Endothelial cell of umbilical vein (primary cell): ENCODE measurements at regions of chr4 and their contacts with region 1.

Region 1: GRCh38 chr4:139890816-139891215 is 225.2 kb downstream of the MGST2 start:
- DNase-seq: peak; percentile 81
- H3K4me3 ChIP-seq: no peak overlapping the region
- H3K27ac ChIP-seq: peak overlapping the region; percentile 51
- H3K4me1 ChIP-seq: peaks cover 24% of the 10 kb centered on the region
- H3K27me3 ChIP-seq: no peaks in the 10 kb centered on the region
- CTCF ChIP-seq: peak; percentile 21 to 22
- POLR2A ChIP-seq: no peak

Region 2: GRCh38 chr4:139901531-139902320 is 10.9 kb after region 1 on chr4:
- CTCF ChIA-PET with region 1: interaction called, 12 read pairs
- POLR2A ChIA-PET with region 1: no interaction called
- dilution Hi-C with region 1: no loop called
- intact Hi-C with region 1: loop called (anchors 1 kb)
- DNase-seq: peak; percentile 79
- H3K4me3 ChIP-seq: peak overlapping the region in 2 of 3 experiments; percentile 1 to 50
- H3K27ac ChIP-seq: peak overlapping the region; percentile 36
- H3K4me1 ChIP-seq: peaks cover 18% of the 10 kb centered on the region
- H3K27me3 ChIP-seq: no peaks in the 10 kb centered on the region
- CTCF ChIP-seq: no peak
- POLR2A ChIP-seq: no peak

Region 3: DNA sequence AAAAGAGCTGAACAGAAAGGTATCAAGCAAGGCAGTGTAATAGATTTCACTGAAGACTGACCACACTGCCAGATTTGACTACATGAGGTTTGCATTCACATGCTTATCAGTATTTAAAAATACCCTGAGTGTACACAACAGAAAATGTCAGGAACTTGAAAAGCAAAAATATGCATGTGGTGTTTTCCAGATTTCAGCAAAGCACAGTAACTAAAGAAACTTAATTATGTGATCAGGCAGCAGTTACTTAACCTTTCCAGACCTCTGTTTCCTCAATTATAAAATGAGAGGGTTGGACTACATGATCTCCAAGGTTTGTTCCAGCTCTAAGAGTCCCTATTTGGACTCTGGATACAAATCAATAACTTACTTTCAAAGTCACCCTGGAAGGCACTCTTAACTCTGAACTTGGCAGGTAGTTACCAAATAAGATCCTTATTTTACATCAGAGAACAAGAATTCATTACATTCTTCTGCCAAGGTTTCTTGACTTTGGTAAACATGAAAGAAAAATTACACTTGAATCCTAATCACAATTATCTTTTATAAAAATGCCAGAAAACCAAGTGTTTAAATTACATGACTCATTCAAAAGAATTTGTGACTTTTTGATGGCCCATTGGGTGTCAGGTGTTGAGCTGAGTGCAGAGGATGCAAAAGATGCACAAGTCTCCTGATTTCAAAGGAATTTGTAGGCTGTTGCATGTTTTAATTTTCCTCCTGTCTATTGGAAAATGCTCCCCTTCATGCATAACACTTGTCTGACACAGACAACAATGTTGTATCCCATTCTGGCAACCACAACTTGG is 16.4 kb after region 1 on chr4:
- CTCF ChIA-PET with region 1: interaction called, 12 read pairs
- POLR2A ChIA-PET with region 1: interaction called, 5 read pairs
- dilution Hi-C with region 1: no loop called
- intact Hi-C with region 1: no loop called
- DNase-seq: peak; percentile 77
- H3K4me3 ChIP-seq: no peak overlapping the region
- H3K27ac ChIP-seq: no peak overlapping the region
- H3K4me1 ChIP-seq: peaks cover 16% of the 10 kb centered on the region
- H3K27me3 ChIP-seq: no peaks in the 10 kb centered on the region
- CTCF ChIP-seq: no peak
- POLR2A ChIP-seq: no peak